ENCODE measurements at regions of chr12 and their contacts with region 1.

Region 1: GRCh38 chr12:116708826-116709756 is 28.8 kb downstream of the SPRING1 start:
- DNase-seq: no peak
- ATAC-seq: peak; percentile 95
- H3K4me3 ChIP-seq: no peak overlapping the region
- H3K27ac ChIP-seq: no peak overlapping the region
- H3K4me1 ChIP-seq: no peaks in the 10 kb centered on the region
- H3K27me3 ChIP-seq: no peaks in the 10 kb centered on the region; a peak in 1 of 4 replicates
- CTCF ChIP-seq: peak; percentile 62 to 69 (median 63); a peak in 5 of 6 replicates
- EP300 ChIP-seq: no peak
- POLR2A ChIP-seq: no peak
- RAD21 ChIP-seq: peak; percentile 78

Region 2: DNA sequence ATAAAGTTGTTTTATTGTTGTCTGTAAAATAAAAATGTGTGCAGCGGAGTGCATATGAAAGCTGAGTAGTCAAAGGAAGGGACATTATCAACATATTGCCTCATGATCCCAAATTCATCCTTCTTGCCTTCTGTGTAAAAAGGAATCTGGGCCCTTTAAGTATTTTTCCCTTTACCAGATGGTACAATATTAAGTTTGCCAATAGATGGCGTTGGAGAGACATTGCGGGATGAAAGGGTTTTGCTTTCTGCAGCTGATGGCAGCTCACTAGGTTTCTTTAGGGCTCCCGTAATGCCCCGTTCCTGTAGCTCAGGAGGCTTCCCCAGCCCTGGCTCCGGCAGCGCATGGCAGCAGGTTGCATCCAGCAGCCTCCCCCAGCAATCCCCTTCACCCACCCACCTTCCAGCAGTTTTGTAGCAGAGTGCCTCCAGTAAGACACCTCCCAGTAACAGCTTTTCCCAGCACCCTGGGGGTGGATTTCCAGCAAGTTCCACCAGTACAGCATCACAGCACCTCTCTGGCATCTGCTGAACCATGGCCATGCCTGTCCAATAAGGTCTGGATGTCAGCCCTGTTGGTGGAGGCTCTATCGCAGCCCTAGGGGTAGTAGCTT is 786.0 kb before region 1 on chr12:
- CTCF ChIA-PET with region 1: interaction called, 5 read pairs
- POLR2A ChIA-PET with region 1: no interaction called
- RAD21 ChIA-PET with region 1: interaction called, 3 read pairs
- SMC1A ChIA-PET with region 1: no interaction called
- in situ Hi-C with region 1: no loop called
- intact Hi-C with region 1: loop called (anchors 1 kb)
- DNase-seq: no peak
- ATAC-seq: peak; percentile 67
- H3K4me3 ChIP-seq: no peak overlapping the region
- H3K27ac ChIP-seq: no peak overlapping the region
- H3K4me1 ChIP-seq: no peaks in the 10 kb centered on the region
- H3K27me3 ChIP-seq: no peaks in the 10 kb centered on the region; a peak in 2 of 4 replicates
- CTCF ChIP-seq: peak; percentile 30 to 50 (median 31); a peak in 3 of 6 replicates
- EP300 ChIP-seq: no peak
- POLR2A ChIP-seq: no peak
- RAD21 ChIP-seq: peak; percentile 44

Region 3: GRCh38 chr12:115998119-115998633 is 710.9 kb before region 1 on chr12:
- CTCF ChIA-PET with region 1: interaction called, 18 read pairs
- POLR2A ChIA-PET with region 1: no interaction called
- RAD21 ChIA-PET with region 1: interaction called, 4 read pairs
- SMC1A ChIA-PET with region 1: interaction called, 4 read pairs
- in situ Hi-C with region 1: loop called (anchors 10 kb)
- intact Hi-C with region 1: loop called (anchors 2 kb)
- DNase-seq: no peak
- ATAC-seq: peak; percentile 68
- H3K4me3 ChIP-seq: no peak overlapping the region
- H3K27ac ChIP-seq: no peak overlapping the region
- H3K4me1 ChIP-seq: peaks cover 3% of the 10 kb centered on the region
- H3K27me3 ChIP-seq: no peaks in the 10 kb centered on the region
- CTCF ChIP-seq: peak; percentile 56 to 65 (median 64)
- EP300 ChIP-seq: no peak
- POLR2A ChIP-seq: no peak
- RAD21 ChIP-seq: peak; percentile 59

Region 4: GRCh38 chr12:116591855-116592637 is 117.0 kb before region 1 on chr12:
- CTCF ChIA-PET with region 1: no interaction called
- POLR2A ChIA-PET with region 1: no interaction called
- RAD21 ChIA-PET with region 1: no interaction called
- SMC1A ChIA-PET with region 1: no interaction called
- in situ Hi-C with region 1: no loop called
- intact Hi-C with region 1: no loop called
- DNase-seq: no peak
- ATAC-seq: no peak
- H3K4me3 ChIP-seq: no peak overlapping the region
- H3K27ac ChIP-seq: no peak overlapping the region
- H3K4me1 ChIP-seq: no peaks in the 10 kb centered on the region
- H3K27me3 ChIP-seq: no peaks in the 10 kb centered on the region; a peak in 1 of 4 replicates
- CTCF ChIP-seq: no peak
- EP300 ChIP-seq: no peak
- POLR2A ChIP-seq: no peak
- RAD21 ChIP-seq: no peak

Region 5: GRCh38 chr12:116659771-116660481 is 49.2 kb before region 1 on chr12:
- CTCF ChIA-PET with region 1: no interaction called
- POLR2A ChIA-PET with region 1: no interaction called
- RAD21 ChIA-PET with region 1: no interaction called
- SMC1A ChIA-PET with region 1: no interaction called
- in situ Hi-C with region 1: no loop called
- intact Hi-C with region 1: no loop called
- DNase-seq: no peak
- ATAC-seq: no peak
- H3K4me3 ChIP-seq: no peak overlapping the region
- H3K27ac ChIP-seq: no peak overlapping the region
- H3K4me1 ChIP-seq: no peaks in the 10 kb centered on the region
- H3K27me3 ChIP-seq: peaks cover 2 to 9% of the 10 kb centered on the region in 2 experiments
- CTCF ChIP-seq: no peak
- EP300 ChIP-seq: no peak
- POLR2A ChIP-seq: no peak
- RAD21 ChIP-seq: no peak

Region 6: GRCh38 chr12:116722245-116722644 is 13.2 kb after region 1 on chr12:
- CTCF ChIA-PET with region 1: interaction called, 13 read pairs
- POLR2A ChIA-PET with region 1: no interaction called
- RAD21 ChIA-PET with region 1: interaction called, 3 read pairs
- SMC1A ChIA-PET with region 1: interaction called, 5 read pairs
- in situ Hi-C with region 1: no loop called
- intact Hi-C with region 1: no loop called
- DNase-seq: no peak
- ATAC-seq: no peak
- H3K4me3 ChIP-seq: no peak overlapping the region
- H3K27ac ChIP-seq: no peak overlapping the region
- H3K4me1 ChIP-seq: no peaks in the 10 kb centered on the region
- H3K27me3 ChIP-seq: no peaks in the 10 kb centered on the region
- CTCF ChIP-seq: no peak
- EP300 ChIP-seq: no peak
- POLR2A ChIP-seq: no peak
- RAD21 ChIP-seq: no peak

Region 7: DNA sequence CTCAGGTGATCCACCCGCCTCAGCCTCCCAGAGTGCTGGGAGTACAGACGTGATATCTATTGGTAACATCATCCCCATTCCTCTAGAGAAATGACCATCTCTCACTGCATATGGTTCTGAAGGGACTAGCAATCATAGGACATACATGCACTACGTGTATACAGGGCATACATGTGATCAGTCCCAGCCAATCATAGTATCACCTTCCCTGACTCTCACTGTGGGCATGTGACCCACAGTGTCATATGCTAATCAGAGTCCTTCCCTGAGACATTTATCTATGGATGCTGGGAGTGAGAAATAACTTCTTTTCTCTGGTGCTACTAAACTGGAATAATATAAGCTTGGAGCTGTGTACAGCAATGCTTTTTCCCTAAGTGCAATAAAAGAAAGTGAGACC is 189.6 kb after region 1 on chr12:
- CTCF ChIA-PET with region 1: no interaction called
- POLR2A ChIA-PET with region 1: no interaction called
- RAD21 ChIA-PET with region 1: no interaction called
- SMC1A ChIA-PET with region 1: no interaction called
- in situ Hi-C with region 1: no loop called
- intact Hi-C with region 1: no loop called
- DNase-seq: no peak
- ATAC-seq: no peak
- H3K4me3 ChIP-seq: no peak overlapping the region
- H3K27ac ChIP-seq: no peak overlapping the region
- H3K4me1 ChIP-seq: no peaks in the 10 kb centered on the region
- H3K27me3 ChIP-seq: no peaks in the 10 kb centered on the region; a peak in 1 of 4 replicates
- CTCF ChIP-seq: no peak
- EP300 ChIP-seq: no peak
- POLR2A ChIP-seq: no peak
- RAD21 ChIP-seq: no peak